ENCODE measurements at regions of chr11 and their contacts with region 1.

Region 1: DNA sequence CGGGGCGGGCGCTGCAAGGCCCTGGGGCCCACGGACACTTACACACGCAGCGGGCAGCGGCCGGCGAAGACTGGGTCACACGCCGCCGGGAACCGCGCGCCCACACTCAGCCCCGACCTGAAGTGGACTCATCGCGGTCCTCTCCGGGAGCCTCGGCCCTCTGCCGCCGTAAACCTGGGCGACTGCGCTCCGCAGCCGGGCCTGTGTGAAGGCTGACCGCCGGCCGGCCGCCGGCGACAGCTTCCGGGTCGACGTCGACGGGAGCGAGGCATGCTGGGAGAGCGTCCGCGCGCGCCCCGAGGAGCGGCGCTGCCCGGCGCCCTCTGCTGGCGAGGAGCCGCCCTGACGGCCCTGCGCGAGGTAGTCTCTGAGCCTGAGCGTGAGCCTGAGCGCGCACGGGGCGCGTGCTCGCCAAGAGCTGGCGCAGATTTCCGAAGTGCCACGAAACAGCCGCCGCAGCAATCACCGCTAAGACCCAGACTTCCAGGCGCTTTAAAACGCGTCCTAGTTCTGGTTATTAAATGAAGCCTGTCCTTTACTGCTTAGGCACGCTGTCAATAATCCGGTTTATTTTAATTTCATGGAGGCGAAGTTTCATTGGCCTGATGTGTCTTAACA is at the start of gene SNX19:
- DNase-seq: peak; percentile 91
- ATAC-seq: peak; percentile 94
- H3K4me3 Mint-ChIP-seq: peak within 1 kb of the TSS; percentile 75
- H3K27ac Mint-ChIP-seq: no peak within 1 kb of the TSS
- H3K4me1 Mint-ChIP-seq: peaks cover 33% of the 10 kb centered on the region
- H3K27me3 Mint-ChIP-seq: peaks cover 24% of the 10 kb centered on the region
- CTCF ChIP-seq: peak; percentile 82
- total RNA-seq, gene SNX19: 24.3 to 28.7 TPM (median 25.2 TPM) in 3 replicates

Region 2: DNA sequence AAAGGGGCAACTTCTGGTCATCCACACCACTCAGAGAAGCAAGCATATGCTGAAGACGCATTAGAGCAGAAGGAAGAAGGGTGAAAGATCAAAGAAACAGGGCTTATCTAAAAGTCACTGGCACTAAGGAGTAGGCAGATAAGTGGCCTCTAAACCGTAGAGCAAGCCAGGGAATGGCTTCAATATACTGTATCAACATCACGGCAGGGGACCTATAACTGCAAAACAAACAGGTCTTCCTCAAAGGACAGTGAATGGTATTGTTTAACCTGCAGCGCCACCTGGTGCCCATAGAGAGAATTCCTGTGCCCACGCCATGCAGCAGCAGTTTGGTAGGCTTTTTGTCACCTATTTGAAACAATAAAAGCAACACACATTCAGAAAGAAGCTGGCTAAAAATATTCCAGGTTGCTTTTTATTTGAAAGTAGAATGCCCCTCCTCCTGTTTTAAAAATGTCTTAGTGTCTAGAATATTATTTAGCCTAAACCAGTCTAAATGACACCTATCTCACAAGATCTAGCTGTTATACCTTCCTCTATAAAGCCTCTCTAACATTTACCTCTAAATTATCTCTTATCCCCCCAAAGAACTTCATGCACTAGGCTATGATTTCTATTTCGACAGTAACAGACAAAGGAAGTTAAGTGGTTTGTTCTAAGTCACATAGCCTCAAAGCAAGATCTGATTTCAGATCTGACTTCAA is 21.9 kb before region 1 on chr11:
- CTCF ChIA-PET with region 1: interaction called, 13 read pairs
- POLR2A ChIA-PET with region 1: no interaction called
- DNase-seq: peak; percentile 76
- ATAC-seq: peak; percentile 83
- H3K4me3 Mint-ChIP-seq: no peak overlapping the region
- H3K27ac Mint-ChIP-seq: no peak overlapping the region
- H3K4me1 Mint-ChIP-seq: peaks cover 20% of the 10 kb centered on the region
- H3K27me3 Mint-ChIP-seq: no peaks in the 10 kb centered on the region
- CTCF ChIP-seq: peak; percentile 87

Region 3: DNA sequence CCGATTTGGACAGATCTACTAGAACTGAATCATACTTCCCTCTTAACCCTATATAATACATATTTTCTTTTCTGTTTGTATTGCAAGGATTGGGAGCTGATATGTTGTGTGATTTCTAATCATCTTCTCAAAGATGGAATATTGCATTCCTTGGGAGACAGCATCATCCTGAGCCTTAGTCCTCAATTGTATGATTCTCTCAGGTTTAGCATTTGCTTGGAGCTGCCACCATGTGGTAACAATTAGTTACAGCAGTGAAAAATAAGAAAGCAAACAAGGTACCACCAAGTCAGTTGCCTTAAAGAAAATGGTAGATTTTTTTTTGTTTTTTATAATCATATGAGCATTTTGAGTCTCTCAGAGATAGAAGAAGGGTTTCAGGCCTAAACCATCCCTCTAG is 12.0 kb before region 1 on chr11:
- CTCF ChIA-PET with region 1: interaction called, 22 read pairs
- POLR2A ChIA-PET with region 1: no interaction called
- DNase-seq: no peak
- ATAC-seq: peak; percentile 53; the same call in 1 of the 2 replicates
- H3K4me3 Mint-ChIP-seq: no peak overlapping the region
- H3K27ac Mint-ChIP-seq: no peak overlapping the region
- H3K4me1 Mint-ChIP-seq: no peaks in the 10 kb centered on the region
- H3K27me3 Mint-ChIP-seq: no peaks in the 10 kb centered on the region
- CTCF ChIP-seq: no peak

Region 4: GRCh38 chr11:130932086-130932712 is 15.9 kb after region 1 on chr11:
- CTCF ChIA-PET with region 1: interaction called, 23 read pairs
- POLR2A ChIA-PET with region 1: no interaction called
- DNase-seq: no peak
- ATAC-seq: no peak; the same call in 1 of the 2 replicates
- H3K4me3 Mint-ChIP-seq: no peak overlapping the region
- H3K27ac Mint-ChIP-seq: no peak overlapping the region
- H3K4me1 Mint-ChIP-seq: no peaks in the 10 kb centered on the region
- H3K27me3 Mint-ChIP-seq: no peaks in the 10 kb centered on the region
- CTCF ChIP-seq: no peak

Region 5: GRCh38 chr11:130945896-130946295 is 29.5 kb after region 1 on chr11:
- CTCF ChIA-PET with region 1: interaction called, 10 read pairs
- POLR2A ChIA-PET with region 1: no interaction called
- DNase-seq: no peak
- ATAC-seq: no peak
- H3K4me3 Mint-ChIP-seq: no peak overlapping the region
- H3K27ac Mint-ChIP-seq: no peak overlapping the region
- H3K4me1 Mint-ChIP-seq: no peaks in the 10 kb centered on the region
- H3K27me3 Mint-ChIP-seq: peaks cover 7% of the 10 kb centered on the region
- CTCF ChIP-seq: no peak

Measured in WTC11 (cell line).